ENCODE measurements at regions of chr15 and their contacts with region 1.

Region 1: GRCh38 chr15:45611305-45611704 is 23.5 kb upstream of the SQOR start:
- DNase-seq: peak in 2 of 4 experiments; percentile 24 to 46
- ATAC-seq: peak; percentile 64
- H3K4me3 ChIP-seq: no peak overlapping the region
- H3K27ac ChIP-seq: no peak overlapping the region
- H3K4me1 ChIP-seq: no peaks in the 10 kb centered on the region
- H3K27me3 ChIP-seq: no peaks in the 10 kb centered on the region
- CTCF ChIP-seq: peak; percentile 35 to 76 (median 50); a peak in 5 of 6 replicates
- EP300 ChIP-seq: no peak
- POLR2A ChIP-seq: no peak
- RAD21 ChIP-seq: peak; percentile 61 to 73

Region 2: GRCh38 chr15:45198337-45199135 is 412.8 kb before region 1 on chr15:
- CTCF ChIA-PET with region 1: no interaction called
- POLR2A ChIA-PET with region 1: no interaction called
- in situ Hi-C with region 1: loop called (anchors 25 kb)
- intact Hi-C with region 1: loop called (anchors 5 kb)
- DNase-seq: peak; percentile 77 to 94 (median 81)
- ATAC-seq: peak; percentile 76
- H3K4me3 ChIP-seq: peak overlapping the region; percentile 79
- H3K27ac ChIP-seq: peak overlapping the region; percentile 92
- H3K4me1 ChIP-seq: peaks cover 0 to 2% of the 10 kb centered on the region in 2 experiments; a peak in 2 of 5 replicates
- H3K27me3 ChIP-seq: no peaks in the 10 kb centered on the region
- CTCF ChIP-seq: peak; percentile 72 to 89 (median 81)
- EP300 ChIP-seq: peak; percentile 45; the same call in 1 of the 2 replicates
- POLR2A ChIP-seq: peak; percentile 76
- RAD21 ChIP-seq: peak in 1 of 2 experiments; percentile 26; a peak in 2 of 4 replicates

Region 3: DNA sequence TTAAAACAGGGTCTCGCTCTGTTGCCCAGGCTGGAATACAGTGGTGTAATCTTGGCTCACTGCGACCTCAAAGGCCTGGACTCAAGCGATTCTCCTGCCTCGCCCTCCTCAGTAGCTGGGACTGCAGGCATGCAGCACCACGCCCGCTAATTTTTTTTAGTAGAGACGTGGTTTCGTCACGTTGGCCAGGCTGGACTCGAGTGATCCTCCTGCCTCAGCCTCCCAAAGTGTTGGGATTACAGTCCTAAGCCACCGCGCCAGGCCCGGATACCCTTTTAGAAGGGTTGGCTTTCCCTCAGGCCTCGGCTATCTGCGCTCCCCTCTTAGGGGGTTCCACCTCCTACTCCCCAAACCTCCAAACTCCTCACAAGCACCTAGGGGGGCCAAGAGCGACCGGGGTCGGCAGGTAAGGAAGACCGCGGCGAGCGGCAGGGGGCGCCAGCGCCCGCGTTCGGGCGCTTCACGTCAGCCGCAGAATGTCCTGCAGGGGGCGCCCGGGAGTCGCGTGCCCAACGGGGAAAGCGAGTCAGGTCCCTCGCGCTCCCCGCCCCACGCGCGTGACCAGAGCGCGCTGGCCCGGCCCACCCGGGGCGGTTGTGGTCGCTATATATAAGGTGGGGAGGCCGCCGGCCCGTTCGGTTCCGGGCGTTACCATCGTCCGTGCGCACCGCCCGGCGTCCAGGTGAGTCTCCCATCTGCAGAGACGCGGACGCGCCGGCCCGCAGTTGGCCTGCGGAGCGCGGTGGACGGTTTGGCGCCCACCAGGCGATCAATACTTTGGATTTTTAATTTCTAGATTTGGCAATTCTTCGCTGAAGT is 181.1 kb before region 1 on chr15:
- CTCF ChIA-PET with region 1: no interaction called
- POLR2A ChIA-PET with region 1: no interaction called
- in situ Hi-C with region 1: no loop called
- intact Hi-C with region 1: loop called (anchors 1 kb)
- DNase-seq: peak; percentile 66 to 77 (median 72)
- ATAC-seq: peak; percentile 94
- H3K4me3 ChIP-seq: no peak overlapping the region
- H3K27ac ChIP-seq: no peak overlapping the region
- H3K4me1 ChIP-seq: peaks cover 0 to 8% of the 10 kb centered on the region in 2 experiments; a peak in 2 of 5 replicates
- H3K27me3 ChIP-seq: no peaks in the 10 kb centered on the region; a peak in 1 of 5 replicates
- CTCF ChIP-seq: peak; percentile 96 to 100 (median 99)
- EP300 ChIP-seq: no peak
- POLR2A ChIP-seq: no peak
- RAD21 ChIP-seq: peak; percentile 60 to 81

Region 4: DNA sequence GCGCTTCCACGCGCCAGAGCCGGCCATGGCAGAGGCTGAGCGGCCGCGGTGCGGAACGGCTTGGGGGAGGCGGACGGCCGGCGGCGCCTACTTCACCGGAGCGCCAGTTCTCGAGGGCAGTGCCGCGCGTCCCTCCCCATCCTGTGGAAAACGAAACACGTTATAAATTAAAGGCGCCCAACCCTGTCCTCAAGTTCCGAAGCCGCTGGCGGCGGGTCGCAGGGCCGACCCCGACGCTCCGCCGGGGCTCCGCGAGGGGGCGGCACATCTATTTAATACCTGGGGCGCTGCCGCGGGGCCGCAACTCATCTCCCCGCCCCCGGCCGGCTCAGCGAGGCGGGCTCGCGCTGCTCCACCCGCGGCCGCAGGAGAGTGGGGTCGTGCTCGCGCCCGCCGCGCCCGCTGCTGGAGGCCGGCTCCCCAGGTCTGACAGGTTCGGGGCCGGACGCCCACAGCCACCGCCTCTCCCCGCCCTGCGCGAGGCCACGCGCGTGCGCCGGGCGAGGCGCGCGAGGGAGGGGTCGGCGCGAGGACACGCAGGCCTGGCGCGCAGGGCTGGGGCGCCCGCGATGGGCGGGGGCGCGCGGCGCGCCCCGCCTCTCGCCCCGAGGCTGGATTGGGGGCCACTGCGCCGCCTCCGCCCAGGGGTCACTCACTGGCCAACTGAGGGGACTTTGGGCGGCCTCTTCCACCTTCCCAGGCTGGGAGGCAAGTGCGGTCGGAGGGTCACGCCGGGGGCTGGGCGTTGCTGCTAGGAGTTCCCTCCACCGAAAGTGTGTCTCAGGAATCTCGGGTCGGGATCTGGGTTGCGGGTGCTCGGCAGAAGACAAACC is 88.8 kb before region 1 on chr15 and contains the start of gene SLC30A4:
- CTCF ChIA-PET with region 1: no interaction called
- POLR2A ChIA-PET with region 1: interaction called, 3 read pairs
- in situ Hi-C with region 1: no loop called
- intact Hi-C with region 1: loop called (anchors 5 kb)
- DNase-seq: peak; percentile 69 to 87 (median 78)
- ATAC-seq: peak; percentile 94
- H3K4me3 ChIP-seq: peak within 1 kb of the TSS; percentile 53
- H3K27ac ChIP-seq: no peak within 1 kb of the TSS
- H3K4me1 ChIP-seq: peaks cover 9 to 16% of the 10 kb centered on the region in 2 experiments; a peak in 4 of 5 replicates
- H3K27me3 ChIP-seq: peaks cover 0 to 18% of the 10 kb centered on the region in 2 experiments; a peak in 3 of 5 replicates
- CTCF ChIP-seq: peak in 2 of 3 experiments; percentile 27 to 44; a peak in 4 of 6 replicates
- EP300 ChIP-seq: no peak
- POLR2A ChIP-seq: no peak
- RAD21 ChIP-seq: peak; percentile 23 to 35; a peak in 2 of 4 replicates
- polyA plus RNA-seq, gene SLC30A4: 0.21 to 0.30 TPM

Region 5: GRCh38 chr15:45670091-45670490 is 58.8 kb after region 1 on chr15:
- CTCF ChIA-PET with region 1: no interaction called
- POLR2A ChIA-PET with region 1: no interaction called
- in situ Hi-C with region 1: no loop called
- intact Hi-C with region 1: no loop called
- DNase-seq: no peak
- ATAC-seq: no peak
- H3K4me3 ChIP-seq: no peak overlapping the region
- H3K27ac ChIP-seq: no peak overlapping the region
- H3K4me1 ChIP-seq: no peaks in the 10 kb centered on the region
- H3K27me3 ChIP-seq: peaks cover 3 to 18% of the 10 kb centered on the region in 2 experiments; a peak in 2 of 5 replicates
- CTCF ChIP-seq: no peak
- EP300 ChIP-seq: no peak
- POLR2A ChIP-seq: no peak
- RAD21 ChIP-seq: no peak